A549 (cell line): ENCODE measurements at regions of chr19 and their contacts with region 1.

Region 1: GRCh38 chr19:38298821-38299567 is 5.1 kb upstream of the C19orf33 start:
- DNase-seq: no peak
- ATAC-seq: no peak
- H3K4me3 ChIP-seq: no peak overlapping the region
- H3K27ac ChIP-seq: peak overlapping the region; percentile 92 to 95
- H3K4me1 ChIP-seq: peaks cover 51% of the 10 kb centered on the region
- CTCF ChIP-seq: no peak
- EP300 ChIP-seq: no peak
- POLR2A ChIP-seq: no peak
- RAD21 ChIP-seq: no peak

Region 2: GRCh38 chr19:38143847-38144246 is 155.1 kb before region 1 on chr19:
- CTCF ChIA-PET with region 1: no interaction called
- POLR2A ChIA-PET with region 1: no interaction called
- DNase-seq: peak in 1 of 2 experiments; percentile 40
- ATAC-seq: peak; percentile 48 to 53; a peak in 5 of 6 replicates
- H3K4me3 ChIP-seq: no peak overlapping the region
- H3K27ac ChIP-seq: no peak overlapping the region
- H3K4me1 ChIP-seq: no peaks in the 10 kb centered on the region
- CTCF ChIP-seq: peak; percentile 51
- EP300 ChIP-seq: no peak
- POLR2A ChIP-seq: no peak
- RAD21 ChIP-seq: peak in 1 of 2 experiments; percentile 33; a peak in 2 of 5 replicates

Region 3: DNA sequence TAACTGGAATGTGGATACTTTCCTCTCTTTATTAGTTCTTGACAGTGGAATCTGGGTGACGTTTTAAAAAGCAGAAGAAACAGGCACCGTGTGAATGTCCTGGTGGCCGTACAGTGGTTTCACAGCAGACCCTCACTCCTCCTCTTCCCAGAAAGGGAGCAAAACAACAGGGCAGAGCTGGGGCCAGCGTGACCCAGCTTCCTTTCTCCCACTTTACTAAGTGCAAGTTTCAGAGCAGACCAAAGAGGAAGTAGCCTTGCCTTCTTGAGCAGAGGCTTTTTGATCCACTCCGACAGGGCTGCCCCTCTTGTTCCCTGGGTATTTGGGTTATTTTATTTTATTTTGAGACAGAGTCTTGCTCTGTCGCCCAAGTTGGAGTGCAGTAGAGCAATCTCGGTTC is 14.6 kb before region 1 on chr19:
- CTCF ChIA-PET with region 1: interaction called, 17 read pairs
- POLR2A ChIA-PET with region 1: interaction called, 13 read pairs
- DNase-seq: no peak
- ATAC-seq: no peak
- H3K4me3 ChIP-seq: no peak overlapping the region
- H3K27ac ChIP-seq: no peak overlapping the region
- H3K4me1 ChIP-seq: peaks cover 7% of the 10 kb centered on the region; the same call in 1 of the 3 replicates
- CTCF ChIP-seq: no peak
- EP300 ChIP-seq: no peak
- POLR2A ChIP-seq: no peak
- RAD21 ChIP-seq: no peak

Region 4: GRCh38 chr19:38355728-38356725 is 57.0 kb after region 1 on chr19:
- CTCF ChIA-PET with region 1: no interaction called
- POLR2A ChIA-PET with region 1: no interaction called
- DNase-seq: no peak
- ATAC-seq: no peak
- H3K4me3 ChIP-seq: no peak overlapping the region
- H3K27ac ChIP-seq: no peak overlapping the region
- H3K4me1 ChIP-seq: 0 out of 3 replicates have a peak, but pooled peaks cover 1% of the 10 kb centered on the region
- CTCF ChIP-seq: no peak
- EP300 ChIP-seq: no peak
- POLR2A ChIP-seq: no peak
- RAD21 ChIP-seq: no peak